Natural killer cell (primary cell): ENCODE measurements at regions of chr22 and their contacts with region 1.

Region 1: GRCh38 chr22:25081409-25081824 is 118.2 kb upstream of the CRYBB3 start:
- DNase-seq: peak; percentile 40 to 76
- ATAC-seq: peak; percentile 60 to 85 (median 79)
- H3K4me3 ChIP-seq: no peak overlapping the region
- H3K4me3 Mint-ChIP-seq: peak overlapping the region; percentile 70
- H3K27ac ChIP-seq: no peak overlapping the region
- H3K27ac Mint-ChIP-seq: peak overlapping the region; percentile 10
- H3K4me1 ChIP-seq: peaks cover 57% of the 10 kb centered on the region
- H3K4me1 Mint-ChIP-seq: peaks cover 54 to 59% of the 10 kb centered on the region in 2 donors
- H3K27me3 ChIP-seq: no peaks in the 10 kb centered on the region
- H3K27me3 Mint-ChIP-seq: no peaks in the 10 kb centered on the region
- CTCF ChIP-seq: peak; percentile 63

Region 2: GRCh38 chr22:25067851-25068421 is 13.5 kb before region 1 on chr22:
- intact Hi-C with region 1: no loop called
- DNase-seq: peak; percentile 72 to 96
- ATAC-seq: peak; percentile 86 to 95 (median 89)
- H3K4me3 ChIP-seq: no peak overlapping the region
- H3K4me3 Mint-ChIP-seq: peak overlapping the region; percentile 92
- H3K27ac ChIP-seq: peak overlapping the region; percentile 83
- H3K27ac Mint-ChIP-seq: peak overlapping the region; percentile 92 to 97
- H3K4me1 ChIP-seq: peaks cover 89% of the 10 kb centered on the region
- H3K4me1 Mint-ChIP-seq: peaks cover 56 to 83% of the 10 kb centered on the region in 2 donors
- H3K27me3 ChIP-seq: no peaks in the 10 kb centered on the region
- H3K27me3 Mint-ChIP-seq: no peaks in the 10 kb centered on the region
- CTCF ChIP-seq: no peak

Region 3: DNA sequence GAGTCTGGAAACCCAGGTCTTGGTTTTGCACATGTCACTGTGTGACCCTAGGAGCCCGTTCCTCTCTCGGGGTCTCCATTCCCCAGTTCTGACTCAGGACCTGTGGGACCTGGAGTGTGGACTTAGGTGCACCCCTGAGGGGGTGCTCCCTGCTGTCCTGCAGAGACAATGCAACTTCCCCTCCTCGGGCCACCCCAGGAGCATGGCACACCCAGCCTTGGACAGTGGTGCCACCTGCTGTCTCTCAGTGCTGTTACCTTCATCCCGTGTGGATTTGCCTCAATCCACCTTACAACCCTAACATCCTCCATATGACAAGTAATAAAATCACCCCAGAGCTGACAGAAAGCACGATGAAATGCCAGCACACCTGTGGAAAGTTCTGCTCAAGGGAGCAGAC is 90.7 kb after region 1 on chr22:
- intact Hi-C with region 1: loop called (anchors 1 kb)
- DNase-seq: peak in 1 of 2 donors; percentile 59
- ATAC-seq: peak in 1 of 3 donors; percentile 24
- H3K4me3 ChIP-seq: no peak overlapping the region
- H3K4me3 Mint-ChIP-seq: no peak overlapping the region
- H3K27ac ChIP-seq: no peak overlapping the region
- H3K27ac Mint-ChIP-seq: no peak overlapping the region
- H3K4me1 ChIP-seq: no peaks in the 10 kb centered on the region
- H3K4me1 Mint-ChIP-seq: no peaks in the 10 kb centered on the region
- H3K27me3 ChIP-seq: no peaks in the 10 kb centered on the region
- H3K27me3 Mint-ChIP-seq: no peaks in the 10 kb centered on the region
- CTCF ChIP-seq: no peak

Region 4: GRCh38 chr22:25202290-25202921 is 121.0 kb after region 1 on chr22:
- intact Hi-C with region 1: loop called (anchors 1 kb)
- DNase-seq: peak; percentile 40 to 71
- ATAC-seq: peak; percentile 62 to 84 (median 68)
- H3K4me3 ChIP-seq: no peak overlapping the region
- H3K4me3 Mint-ChIP-seq: no peak overlapping the region
- H3K27ac ChIP-seq: no peak overlapping the region
- H3K27ac Mint-ChIP-seq: no peak overlapping the region
- H3K4me1 ChIP-seq: no peaks in the 10 kb centered on the region
- H3K4me1 Mint-ChIP-seq: peaks cover 0 to 5% of the 10 kb centered on the region in 2 donors
- H3K27me3 ChIP-seq: no peaks in the 10 kb centered on the region
- H3K27me3 Mint-ChIP-seq: no peaks in the 10 kb centered on the region
- CTCF ChIP-seq: peak; percentile 86

Region 5: GRCh38 chr22:25334162-25334490 is 252.7 kb after region 1 on chr22:
- intact Hi-C with region 1: loop called (anchors 10 kb)
- DNase-seq: peak in 1 of 2 donors; percentile 58
- ATAC-seq: peak in 2 of 3 donors; percentile 45 to 79
- H3K4me3 ChIP-seq: no peak overlapping the region
- H3K4me3 Mint-ChIP-seq: no peak overlapping the region
- H3K27ac ChIP-seq: no peak overlapping the region
- H3K27ac Mint-ChIP-seq: no peak overlapping the region
- H3K4me1 ChIP-seq: no peaks in the 10 kb centered on the region
- H3K4me1 Mint-ChIP-seq: peaks cover 0 to 6% of the 10 kb centered on the region in 2 donors
- H3K27me3 ChIP-seq: no peaks in the 10 kb centered on the region
- H3K27me3 Mint-ChIP-seq: no peaks in the 10 kb centered on the region
- CTCF ChIP-seq: no peak